K562 (cell line): ENCODE measurements at regions of chr6 and their contacts with region 1.

Region 1: DNA sequence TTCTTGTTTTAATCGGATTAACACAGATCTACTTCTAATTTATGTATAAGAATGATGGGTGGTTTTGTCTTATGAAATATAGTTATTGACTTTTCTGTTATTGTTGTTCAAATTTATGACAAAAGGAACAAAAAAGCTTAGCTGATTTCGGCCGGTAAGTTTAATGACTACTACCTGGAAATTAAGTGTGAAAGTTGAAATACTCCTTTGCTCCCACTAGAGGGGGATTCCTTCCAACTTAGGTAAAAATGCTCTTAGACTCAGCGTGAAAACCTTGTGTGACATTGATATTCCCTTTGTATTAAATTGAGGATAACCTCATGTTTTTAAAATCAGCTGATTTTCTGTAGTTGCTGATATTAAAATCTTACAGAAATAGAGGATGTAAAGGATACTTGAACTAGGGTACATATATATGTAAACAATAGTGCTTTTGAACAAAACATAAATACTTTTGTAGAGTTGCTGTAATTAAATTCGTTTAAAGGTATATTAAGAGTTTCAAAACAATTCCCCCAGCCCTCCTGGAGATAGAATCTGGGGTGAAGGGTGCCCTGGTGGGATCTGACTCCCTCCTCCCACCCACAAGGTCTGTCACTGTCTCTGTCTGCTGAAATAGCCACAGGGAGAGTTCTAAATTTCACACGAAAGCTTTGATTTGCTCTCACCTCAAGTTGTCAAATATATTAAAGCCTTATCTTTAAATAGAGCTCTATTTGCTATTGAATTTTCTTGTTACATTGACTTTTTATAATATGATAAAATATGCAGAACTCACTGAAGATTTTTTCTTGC is 257.5 kb downstream of the ARID1B start:
- DNase-seq: peak; percentile 49 to 66 (median 58)
- ATAC-seq: peak; percentile 85
- H3K4me3 ChIP-seq: no peak overlapping the region
- H3K27ac ChIP-seq: no peak overlapping the region
- H3K4me1 ChIP-seq: no peaks in the 10 kb centered on the region; a peak in 3 of 5 replicates
- H3K27me3 ChIP-seq: no peaks in the 10 kb centered on the region
- CTCF ChIP-seq: peak; percentile 60 to 85 (median 70); a peak in 5 of 6 replicates
- EP300 ChIP-seq: no peak
- POLR2A ChIP-seq: no peak
- RAD21 ChIP-seq: peak; percentile 67 to 82

Region 2: DNA sequence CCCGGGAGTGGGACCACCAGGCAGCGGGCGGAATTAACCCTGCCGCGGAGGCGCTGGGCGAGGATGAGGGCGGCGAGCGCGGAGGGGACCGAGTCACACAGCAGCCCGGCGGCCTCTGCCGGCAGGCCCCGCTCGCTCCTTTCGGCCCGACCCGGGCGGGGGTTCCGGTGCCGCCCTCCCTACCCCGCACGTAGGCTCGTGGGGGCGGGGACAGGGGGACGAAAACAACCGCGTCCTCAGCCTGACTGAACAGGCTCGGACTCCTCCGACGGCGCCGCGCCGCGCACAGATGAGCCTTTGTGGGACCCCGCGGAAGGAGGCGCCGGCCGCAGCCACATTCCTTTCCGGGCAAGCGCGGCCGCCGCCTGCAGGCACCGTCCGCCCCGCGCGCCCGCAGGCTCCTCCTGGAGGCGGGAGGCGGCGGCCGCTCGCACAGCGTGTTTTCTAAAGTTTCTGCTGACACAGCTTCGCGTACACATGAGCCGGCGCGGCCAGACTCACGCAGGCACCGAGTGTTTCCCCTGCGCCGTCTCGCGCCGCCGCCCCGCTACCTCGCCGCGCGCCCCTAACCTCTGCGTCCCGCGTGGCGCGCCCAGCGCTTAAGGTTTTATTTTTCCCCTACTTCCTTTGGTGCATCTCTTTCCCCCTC is 13.2 kb before region 1 on chr6:
- CTCF ChIA-PET with region 1: no interaction called
- POLR2A ChIA-PET with region 1: interaction called, 13 read pairs
- in situ Hi-C with region 1: no loop called
- intact Hi-C with region 1: no loop called
- DNase-seq: peak; percentile 87 to 93 (median 90)
- ATAC-seq: peak; percentile 92
- H3K4me3 ChIP-seq: peak overlapping the region; percentile 74
- H3K27ac ChIP-seq: peak overlapping the region; percentile 98
- H3K4me1 ChIP-seq: peaks cover 19 to 25% of the 10 kb centered on the region in 2 experiments
- H3K27me3 ChIP-seq: no peaks in the 10 kb centered on the region
- CTCF ChIP-seq: peak; percentile 52 to 73 (median 54); a peak in 5 of 6 replicates
- EP300 ChIP-seq: no peak
- POLR2A ChIP-seq: peak; percentile 96
- RAD21 ChIP-seq: peak; percentile 10 to 42

Region 3: GRCh38 chr6:157089258-157089657 is 54.6 kb after region 1 on chr6:
- CTCF ChIA-PET with region 1: no interaction called
- POLR2A ChIA-PET with region 1: no interaction called
- in situ Hi-C with region 1: no loop called
- intact Hi-C with region 1: no loop called
- DNase-seq: no peak
- ATAC-seq: no peak
- H3K4me3 ChIP-seq: no peak overlapping the region
- H3K27ac ChIP-seq: no peak overlapping the region
- H3K4me1 ChIP-seq: no peaks in the 10 kb centered on the region
- H3K27me3 ChIP-seq: no peaks in the 10 kb centered on the region
- CTCF ChIP-seq: no peak
- EP300 ChIP-seq: no peak
- POLR2A ChIP-seq: no peak
- RAD21 ChIP-seq: no peak

Region 4: GRCh38 chr6:157151989-157152388 is 117.4 kb after region 1 on chr6:
- CTCF ChIA-PET with region 1: no interaction called
- POLR2A ChIA-PET with region 1: no interaction called
- in situ Hi-C with region 1: no loop called
- intact Hi-C with region 1: loop called (anchors 10 kb)
- DNase-seq: no peak
- ATAC-seq: no peak
- H3K4me3 ChIP-seq: no peak overlapping the region
- H3K27ac ChIP-seq: no peak overlapping the region
- H3K4me1 ChIP-seq: peaks cover 0 to 6% of the 10 kb centered on the region in 2 experiments; a peak in 1 of 5 replicates
- H3K27me3 ChIP-seq: no peaks in the 10 kb centered on the region
- CTCF ChIP-seq: no peak
- EP300 ChIP-seq: no peak
- POLR2A ChIP-seq: no peak
- RAD21 ChIP-seq: no peak

Region 5: GRCh38 chr6:157184202-157185020 is 149.8 kb after region 1 on chr6:
- CTCF ChIA-PET with region 1: interaction called, 35 read pairs
- POLR2A ChIA-PET with region 1: interaction called, 3 read pairs
- in situ Hi-C with region 1: no loop called
- intact Hi-C with region 1: loop called (anchors 1 kb)
- DNase-seq: peak; percentile 85 to 88 (median 88)
- ATAC-seq: peak; percentile 99
- H3K4me3 ChIP-seq: no peak overlapping the region
- H3K27ac ChIP-seq: no peak overlapping the region
- H3K4me1 ChIP-seq: peaks cover 0 to 6% of the 10 kb centered on the region in 2 experiments; a peak in 3 of 5 replicates
- H3K27me3 ChIP-seq: no peaks in the 10 kb centered on the region
- CTCF ChIP-seq: peak; percentile 96 to 97 (median 97)
- EP300 ChIP-seq: 0 out of 2 replicates have a peak, but pooled peaks have one; percentile 15
- POLR2A ChIP-seq: no peak
- RAD21 ChIP-seq: peak; percentile 90 to 94

Region 6: DNA sequence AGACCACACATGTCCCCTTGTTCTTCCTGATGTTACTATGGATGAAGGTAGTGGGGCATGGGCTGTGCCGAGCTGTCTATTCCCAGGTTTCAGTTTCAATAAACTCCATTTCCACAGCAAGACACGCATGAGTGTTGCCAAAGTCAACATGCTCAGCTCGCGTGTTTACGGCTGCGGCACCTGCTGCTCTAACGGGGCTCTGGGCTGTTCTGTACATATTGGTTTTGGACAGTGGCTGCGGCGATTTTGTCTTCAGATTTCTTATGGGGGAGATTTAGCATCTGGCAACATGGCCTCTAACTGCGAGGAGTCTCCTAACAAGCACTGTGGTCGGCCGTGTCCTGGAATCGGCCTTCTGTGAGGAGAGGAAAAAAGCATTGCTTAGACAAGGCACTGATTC is 230.1 kb after region 1 on chr6:
- CTCF ChIA-PET with region 1: no interaction called
- POLR2A ChIA-PET with region 1: no interaction called
- in situ Hi-C with region 1: no loop called
- intact Hi-C with region 1: no loop called
- DNase-seq: no peak
- ATAC-seq: no peak
- H3K4me3 ChIP-seq: no peak overlapping the region
- H3K27ac ChIP-seq: no peak overlapping the region
- H3K4me1 ChIP-seq: peaks cover 0 to 20% of the 10 kb centered on the region in 2 experiments; a peak in 1 of 5 replicates
- H3K27me3 ChIP-seq: peaks cover 53 to 77% of the 10 kb centered on the region in 2 experiments
- CTCF ChIP-seq: no peak
- EP300 ChIP-seq: no peak
- POLR2A ChIP-seq: no peak
- RAD21 ChIP-seq: no peak